Activated B cell treated with CpG ODN at 0.5 μM for 24 hours (primary cell): ENCODE measurements at regions of chr18 and their contacts with region 1.

Region 1: GRCh38 chr18:42114310-42114943 is 159.4 kb downstream of the PIK3C3 start:
- DNase-seq: no peak
- ATAC-seq: peak; percentile 65
- H3K4me3 Mint-ChIP-seq: no peak overlapping the region
- H3K27ac Mint-ChIP-seq: no peak overlapping the region
- H3K4me1 Mint-ChIP-seq: peaks cover 15% of the 10 kb centered on the region
- H3K27me3 Mint-ChIP-seq: no peaks in the 10 kb centered on the region
- CTCF ChIP-seq: peak; percentile 85

Region 2: GRCh38 chr18:42053188-42053781 is 61.1 kb before region 1 on chr18:
- CTCF ChIA-PET with region 1: interaction called, 11 read pairs
- POLR2A ChIA-PET with region 1: no interaction called
- intact Hi-C with region 1: no loop called
- DNase-seq: no peak
- ATAC-seq: peak; percentile 50
- H3K4me3 Mint-ChIP-seq: no peak overlapping the region
- H3K27ac Mint-ChIP-seq: no peak overlapping the region
- H3K4me1 Mint-ChIP-seq: peaks cover 8% of the 10 kb centered on the region
- H3K27me3 Mint-ChIP-seq: no peaks in the 10 kb centered on the region
- CTCF ChIP-seq: peak; percentile 42

Region 3: GRCh38 chr18:42064109-42064508 is 50.3 kb before region 1 on chr18:
- CTCF ChIA-PET with region 1: no interaction called
- POLR2A ChIA-PET with region 1: no interaction called
- intact Hi-C with region 1: no loop called
- DNase-seq: no peak
- ATAC-seq: no peak
- H3K4me3 Mint-ChIP-seq: no peak overlapping the region
- H3K27ac Mint-ChIP-seq: no peak overlapping the region
- H3K4me1 Mint-ChIP-seq: no peaks in the 10 kb centered on the region
- H3K27me3 Mint-ChIP-seq: no peaks in the 10 kb centered on the region
- CTCF ChIP-seq: no peak

Region 4: DNA sequence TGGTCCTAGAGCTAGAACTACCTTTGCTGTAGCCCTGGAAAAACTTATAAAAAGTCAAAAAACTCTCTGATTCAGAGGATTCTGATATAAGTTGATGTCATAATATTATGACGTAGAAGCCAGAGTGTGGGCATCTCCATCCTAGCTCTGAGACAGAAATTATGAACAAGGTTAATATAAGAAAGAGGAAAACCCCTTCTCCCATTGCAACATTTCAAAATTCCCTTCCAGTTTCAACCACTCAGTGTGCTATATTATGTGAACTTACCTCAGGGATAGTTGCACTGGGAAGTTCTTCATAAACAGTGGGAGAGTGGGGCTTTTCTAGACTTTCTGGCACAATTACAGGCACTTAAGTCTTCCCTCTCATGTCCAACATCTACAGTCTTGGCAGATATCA is 12.2 kb after region 1 on chr18:
- CTCF ChIA-PET with region 1: interaction called, 10 read pairs
- POLR2A ChIA-PET with region 1: no interaction called
- intact Hi-C with region 1: no loop called
- DNase-seq: no peak
- ATAC-seq: no peak
- H3K4me3 Mint-ChIP-seq: no peak overlapping the region
- H3K27ac Mint-ChIP-seq: no peak overlapping the region
- H3K4me1 Mint-ChIP-seq: no peaks in the 10 kb centered on the region
- H3K27me3 Mint-ChIP-seq: peaks cover 2% of the 10 kb centered on the region
- CTCF ChIP-seq: no peak

Region 5: DNA sequence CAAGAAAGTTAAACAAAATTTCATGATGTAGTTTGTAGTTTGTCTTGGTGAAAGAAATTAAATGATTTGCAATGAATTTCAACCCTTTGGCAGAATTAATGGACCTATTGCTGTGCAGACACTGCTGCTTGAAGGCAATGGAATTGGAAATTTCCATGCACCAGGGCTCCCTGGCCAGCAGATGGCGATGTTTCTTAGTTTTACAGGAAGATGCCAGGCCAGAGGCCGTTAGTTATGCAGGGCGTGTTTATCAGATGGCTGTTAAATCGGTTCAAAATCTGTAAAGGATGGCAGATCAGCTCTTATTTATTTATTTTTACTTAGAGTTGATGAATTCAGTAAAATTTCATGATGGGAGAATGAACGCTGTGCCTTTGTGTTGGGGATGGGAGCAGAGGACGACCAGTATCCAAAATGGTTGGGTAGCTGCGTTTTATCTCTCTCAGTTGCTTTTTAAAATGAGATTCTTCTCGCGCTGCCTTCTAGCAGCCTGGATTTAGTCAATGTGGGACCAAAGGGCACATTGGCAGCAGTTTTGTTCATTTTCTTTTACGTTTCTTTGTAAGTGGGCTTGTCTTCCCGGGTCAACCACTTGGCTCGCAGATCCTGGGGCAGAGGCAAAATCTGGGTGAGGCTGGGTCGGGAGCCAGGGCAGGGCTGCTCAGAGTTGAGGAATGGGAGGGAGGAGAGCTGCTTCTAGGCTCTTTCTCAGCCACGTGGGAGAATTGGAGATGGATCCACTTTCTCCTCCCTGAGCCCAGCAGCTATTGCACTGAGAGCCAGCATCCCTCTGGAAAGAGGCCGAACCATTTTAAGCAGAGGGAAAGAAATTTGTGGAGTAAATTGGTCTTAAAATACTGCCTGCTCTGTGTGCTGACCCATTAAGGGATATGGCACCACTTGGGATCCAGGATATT is 184.6 kb after region 1 on chr18:
- CTCF ChIA-PET with region 1: interaction called, 4 read pairs
- POLR2A ChIA-PET with region 1: no interaction called
- intact Hi-C with region 1: loop called (anchors 5 kb)
- DNase-seq: no peak
- ATAC-seq: peak; percentile 47
- H3K4me3 Mint-ChIP-seq: no peak overlapping the region
- H3K27ac Mint-ChIP-seq: no peak overlapping the region
- H3K4me1 Mint-ChIP-seq: no peaks in the 10 kb centered on the region
- H3K27me3 Mint-ChIP-seq: peaks cover 1% of the 10 kb centered on the region
- CTCF ChIP-seq: peak; percentile 75

Region 6: GRCh38 chr18:42893977-42894376 is 779.5 kb after region 1 on chr18:
- CTCF ChIA-PET with region 1: no interaction called
- POLR2A ChIA-PET with region 1: no interaction called
- intact Hi-C with region 1: no loop called
- DNase-seq: no peak
- ATAC-seq: no peak
- H3K4me3 Mint-ChIP-seq: no peak overlapping the region
- H3K27ac Mint-ChIP-seq: no peak overlapping the region
- H3K4me1 Mint-ChIP-seq: no peaks in the 10 kb centered on the region
- H3K27me3 Mint-ChIP-seq: no peaks in the 10 kb centered on the region
- CTCF ChIP-seq: no peak

Region 7: DNA sequence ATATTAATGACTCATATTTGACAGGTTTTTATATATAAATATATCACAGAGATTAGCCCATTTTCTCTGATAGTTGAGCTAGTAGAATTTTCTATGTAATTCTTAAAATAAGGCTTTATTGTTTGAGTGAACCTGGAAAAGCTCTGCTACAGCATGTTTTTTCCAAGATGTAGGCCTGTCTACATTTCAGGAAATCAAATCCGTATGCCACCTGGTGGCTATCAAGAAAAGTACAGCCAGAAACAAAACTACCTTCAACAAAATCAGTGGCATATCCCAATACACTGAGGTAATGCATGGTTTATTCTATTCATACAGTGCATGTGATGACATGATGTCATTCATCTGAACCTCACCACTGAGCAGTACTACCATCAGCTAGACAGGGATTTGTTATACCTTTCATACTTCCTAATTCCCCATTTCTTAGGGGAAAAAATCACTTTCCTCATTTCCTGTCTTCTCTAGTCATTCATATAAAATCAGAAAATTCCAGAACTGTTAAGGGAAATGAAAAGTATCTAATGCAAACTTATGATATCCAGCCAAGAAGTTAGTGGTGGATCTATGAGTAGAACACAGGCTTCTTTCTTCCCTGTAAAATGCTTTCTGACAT is 1473.2 kb after region 1 on chr18:
- CTCF ChIA-PET with region 1: interaction called, 15 read pairs
- POLR2A ChIA-PET with region 1: no interaction called
- intact Hi-C with region 1: no loop called
- DNase-seq: no peak
- ATAC-seq: no peak
- H3K4me3 Mint-ChIP-seq: no peak overlapping the region
- H3K27ac Mint-ChIP-seq: no peak overlapping the region
- H3K4me1 Mint-ChIP-seq: no peaks in the 10 kb centered on the region
- H3K27me3 Mint-ChIP-seq: no peaks in the 10 kb centered on the region
- CTCF ChIP-seq: no peak